WTC11 (cell line): ENCODE measurements at regions of chr22 and their contacts with region 1.

Region 1: DNA sequence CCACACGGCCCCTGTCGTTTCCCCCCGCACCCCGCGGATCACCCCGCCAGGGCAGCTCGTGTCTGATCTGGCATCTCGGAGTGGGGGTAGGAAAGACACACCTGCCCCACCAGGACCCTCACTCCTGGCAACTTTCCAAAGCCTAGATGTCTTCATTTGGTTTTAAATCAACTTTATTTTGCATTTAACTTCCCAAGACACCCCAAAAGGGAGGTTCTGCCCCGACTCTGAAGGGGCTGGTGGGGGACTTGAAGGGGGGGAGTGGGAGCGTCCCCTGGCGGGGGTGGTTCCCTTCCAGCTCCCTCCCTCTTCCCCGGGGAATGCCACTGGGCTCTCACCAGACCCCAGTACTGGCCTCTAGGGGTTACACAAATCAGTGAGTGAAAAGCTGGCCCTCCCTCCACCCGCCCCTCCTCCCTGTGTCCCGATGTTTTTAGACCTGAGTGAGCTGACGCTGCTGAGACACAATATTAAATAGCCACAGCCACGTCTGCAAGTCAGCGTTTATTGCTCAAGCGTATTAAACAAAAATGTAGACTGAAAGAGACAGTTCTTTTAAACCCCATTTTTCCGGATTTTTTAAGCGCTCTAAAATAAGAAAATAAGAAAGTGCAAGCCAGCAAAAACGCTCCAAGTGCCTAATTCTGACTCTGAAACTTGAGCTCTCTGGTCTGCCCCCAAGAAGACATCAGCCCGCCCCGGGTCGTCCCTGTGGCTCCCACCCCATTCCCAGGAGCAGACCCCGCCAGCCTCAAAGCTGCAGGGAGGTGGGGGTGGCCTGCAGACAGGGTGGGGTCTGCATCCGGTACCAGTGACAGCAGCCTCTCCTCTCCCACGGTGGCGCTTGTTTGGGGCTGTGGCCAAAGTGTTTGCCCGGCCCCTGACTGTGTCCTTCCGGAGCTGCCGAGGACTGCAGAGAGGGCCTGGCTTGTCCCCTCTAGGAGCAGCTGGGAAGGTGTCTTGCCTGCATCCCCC is 1.1 kb upstream of the TTLL8 start:
- DNase-seq: peak; percentile 59
- ATAC-seq: peak; percentile 74
- H3K4me3 Mint-ChIP-seq: peak overlapping the region; percentile 68
- H3K27ac Mint-ChIP-seq: no peak overlapping the region
- H3K4me1 Mint-ChIP-seq: peaks cover 12% of the 10 kb centered on the region
- H3K27me3 Mint-ChIP-seq: peaks cover 22% of the 10 kb centered on the region
- CTCF ChIP-seq: no peak

Region 2: DNA sequence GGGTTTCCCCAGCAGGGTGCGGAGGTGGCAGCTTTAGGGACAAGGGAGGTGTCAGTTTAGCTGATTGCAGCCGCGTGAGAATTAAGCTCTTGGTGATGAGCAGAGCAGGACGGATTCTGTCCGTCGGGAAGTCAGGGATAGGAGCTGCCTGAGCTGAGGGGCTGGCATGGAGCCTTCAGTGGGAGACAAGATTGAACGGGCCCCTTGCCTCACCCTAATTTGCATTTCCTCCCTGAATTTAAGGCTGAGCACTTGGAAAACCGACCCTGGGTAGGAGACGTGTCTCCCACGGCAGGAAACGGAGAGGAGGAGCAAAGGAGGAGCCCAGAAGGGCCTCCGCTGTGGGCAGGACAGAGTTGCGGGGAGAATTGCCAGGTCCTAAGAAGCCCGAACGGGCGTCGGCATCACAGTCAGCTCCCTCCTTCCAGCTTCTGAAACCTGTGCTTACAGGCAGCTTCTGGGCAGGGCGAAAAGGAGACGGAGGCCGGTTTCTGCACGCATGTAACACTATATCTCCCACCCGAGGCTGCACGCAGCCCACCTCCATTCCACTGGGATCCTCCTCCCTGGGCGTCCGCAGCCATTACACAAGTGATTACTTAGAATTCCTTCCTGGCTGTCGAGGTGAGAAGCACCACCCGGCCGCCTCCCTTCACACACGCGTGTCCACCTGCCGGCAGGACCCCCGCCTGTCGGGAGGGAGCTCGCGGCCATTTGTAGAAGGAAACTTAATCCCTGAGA is 577.4 kb before region 1 on chr22:
- CTCF ChIA-PET with region 1: no interaction called
- POLR2A ChIA-PET with region 1: no interaction called
- DNase-seq: no peak
- ATAC-seq: peak; percentile 78
- H3K4me3 Mint-ChIP-seq: peak overlapping the region; percentile 29; the same call in 1 of the 2 replicates
- H3K27ac Mint-ChIP-seq: no peak overlapping the region; the same call in 1 of the 2 replicates
- H3K4me1 Mint-ChIP-seq: peaks cover 50% of the 10 kb centered on the region
- H3K27me3 Mint-ChIP-seq: no peaks in the 10 kb centered on the region; the same call in 1 of the 2 replicates
- CTCF ChIP-seq: no peak

Region 3: GRCh38 chr22:49724893-49725474 is 334.2 kb before region 1 on chr22:
- CTCF ChIA-PET with region 1: no interaction called
- POLR2A ChIA-PET with region 1: no interaction called
- DNase-seq: peak; percentile 85
- ATAC-seq: peak; percentile 97
- H3K4me3 Mint-ChIP-seq: no peak overlapping the region
- H3K27ac Mint-ChIP-seq: no peak overlapping the region
- H3K4me1 Mint-ChIP-seq: no peaks in the 10 kb centered on the region
- H3K27me3 Mint-ChIP-seq: peaks cover 32% of the 10 kb centered on the region
- CTCF ChIP-seq: peak; percentile 33; the same call in 1 of the 2 replicates

Region 4: GRCh38 chr22:49970528-49971231 is 88.5 kb before region 1 on chr22:
- CTCF ChIA-PET with region 1: no interaction called
- POLR2A ChIA-PET with region 1: no interaction called
- DNase-seq: peak; percentile 64
- ATAC-seq: peak; percentile 73
- H3K4me3 Mint-ChIP-seq: peak overlapping the region; percentile 61
- H3K27ac Mint-ChIP-seq: peak overlapping the region; percentile 57; the same call in 1 of the 2 replicates
- H3K4me1 Mint-ChIP-seq: peaks cover 6% of the 10 kb centered on the region
- H3K27me3 Mint-ChIP-seq: peaks cover 8% of the 10 kb centered on the region
- CTCF ChIP-seq: no peak

Region 5: DNA sequence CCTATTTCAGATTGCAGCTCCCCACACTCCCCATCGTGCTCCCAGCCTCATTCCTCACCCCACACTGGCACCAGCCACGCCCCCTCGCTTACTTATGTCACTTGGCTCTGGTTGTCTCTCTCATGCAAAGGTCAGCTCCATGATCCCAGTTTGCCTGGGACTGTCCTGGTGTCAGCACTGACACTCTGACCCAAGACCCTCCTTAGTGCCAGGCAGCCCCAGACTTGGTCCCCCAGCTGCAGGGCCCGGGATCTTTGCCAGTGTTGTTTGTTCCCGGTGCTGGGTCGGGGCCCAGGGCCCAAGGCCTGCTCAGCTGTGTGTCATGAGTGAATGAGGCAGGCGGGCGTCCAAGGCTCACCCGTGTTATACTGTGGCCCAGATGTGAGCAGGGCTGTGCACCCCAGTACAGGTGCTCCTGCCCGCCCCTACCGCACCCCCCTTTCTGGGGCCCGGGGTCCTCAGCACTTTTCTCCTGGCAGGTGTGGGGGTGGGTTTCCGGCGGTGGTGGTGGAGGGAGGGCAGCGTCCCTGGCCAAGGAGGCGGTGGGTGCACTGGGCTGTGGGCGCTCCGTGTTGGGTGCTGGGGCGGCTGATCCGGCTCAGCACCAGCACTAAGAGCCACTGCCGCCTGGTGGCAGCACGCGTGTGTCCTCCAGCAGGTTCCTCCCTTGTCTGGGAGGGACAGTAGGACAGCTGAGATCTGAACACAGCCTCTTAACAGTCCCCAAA is 66.1 kb before region 1 on chr22:
- CTCF ChIA-PET with region 1: interaction called, 17 read pairs
- POLR2A ChIA-PET with region 1: no interaction called
- DNase-seq: peak; percentile 72
- ATAC-seq: peak; percentile 90
- H3K4me3 Mint-ChIP-seq: no peak overlapping the region
- H3K27ac Mint-ChIP-seq: no peak overlapping the region
- H3K4me1 Mint-ChIP-seq: no peaks in the 10 kb centered on the region
- H3K27me3 Mint-ChIP-seq: peaks cover 28% of the 10 kb centered on the region
- CTCF ChIP-seq: peak; percentile 55

Region 6: GRCh38 chr22:50074551-50075530 is 15.6 kb after region 1 on chr22:
- CTCF ChIA-PET with region 1: interaction called, 13 read pairs
- POLR2A ChIA-PET with region 1: no interaction called
- DNase-seq: no peak
- ATAC-seq: peak; percentile 31; the same call in 1 of the 2 replicates
- H3K4me3 Mint-ChIP-seq: no peak overlapping the region
- H3K27ac Mint-ChIP-seq: no peak overlapping the region
- H3K4me1 Mint-ChIP-seq: no peaks in the 10 kb centered on the region
- H3K27me3 Mint-ChIP-seq: no peaks in the 10 kb centered on the region
- CTCF ChIP-seq: no peak

Region 7: GRCh38 chr22:50085211-50085972 is 26.2 kb after region 1 on chr22 and contains the start of gene MLC1:
- CTCF ChIA-PET with region 1: interaction called, 13 read pairs
- POLR2A ChIA-PET with region 1: no interaction called
- DNase-seq: no peak
- ATAC-seq: peak; percentile 55
- H3K4me3 Mint-ChIP-seq: peak within 1 kb of the TSS; percentile 22
- H3K27ac Mint-ChIP-seq: no peak within 1 kb of the TSS
- H3K4me1 Mint-ChIP-seq: no peaks in the 10 kb centered on the region; the same call in 1 of the 2 replicates
- H3K27me3 Mint-ChIP-seq: peaks cover 8% of the 10 kb centered on the region; the same call in 1 of the 2 replicates
- CTCF ChIP-seq: no peak
- total RNA-seq, gene MLC1: 0.13 to 0.16 TPM (median 0.16 TPM) in 3 replicates

Region 8: GRCh38 chr22:50141891-50142363 is 82.7 kb after region 1 on chr22:
- CTCF ChIA-PET with region 1: interaction called, 12 read pairs
- POLR2A ChIA-PET with region 1: no interaction called
- DNase-seq: peak; percentile 41
- ATAC-seq: peak; percentile 74
- H3K4me3 Mint-ChIP-seq: no peak overlapping the region
- H3K27ac Mint-ChIP-seq: no peak overlapping the region
- H3K4me1 Mint-ChIP-seq: peaks cover 2% of the 10 kb centered on the region; the same call in 1 of the 2 replicates
- H3K27me3 Mint-ChIP-seq: no peaks in the 10 kb centered on the region
- CTCF ChIP-seq: peak; percentile 28; the same call in 1 of the 2 replicates

Region 9: DNA sequence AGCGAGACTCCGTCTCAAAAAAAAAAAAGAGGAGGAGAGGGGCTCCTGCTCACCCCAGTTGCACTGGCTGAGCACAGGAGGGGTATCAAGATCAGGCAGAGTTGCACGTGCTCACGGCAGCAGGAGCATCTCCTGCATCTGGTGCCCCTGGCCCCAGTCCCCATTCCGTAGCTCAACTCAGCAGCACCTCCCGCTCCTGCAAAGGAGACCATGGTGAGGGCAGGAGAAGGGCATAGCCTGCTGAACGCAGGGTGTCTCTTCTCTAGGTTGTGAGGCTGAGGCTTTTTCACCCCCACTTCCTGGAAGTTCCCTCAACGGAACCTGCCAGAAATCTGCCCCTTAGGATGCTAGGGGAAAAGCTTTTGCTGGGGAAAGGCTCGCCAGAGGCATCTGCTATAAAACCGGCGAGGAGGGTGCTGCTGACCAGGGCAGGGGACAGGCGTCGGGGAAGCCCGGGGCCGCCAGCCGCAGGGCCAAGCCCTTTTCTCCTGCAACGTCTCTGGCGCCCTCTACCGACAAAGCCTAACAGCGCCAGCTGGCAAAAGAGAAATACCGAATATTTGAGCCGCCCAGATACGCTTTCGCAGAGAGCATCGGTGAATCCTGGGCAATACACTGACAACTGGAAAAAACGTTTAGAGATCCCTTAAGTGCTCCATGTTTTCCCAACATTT is 282.9 kb after region 1 on chr22:
- CTCF ChIA-PET with region 1: no interaction called
- POLR2A ChIA-PET with region 1: no interaction called
- DNase-seq: peak; percentile 96
- ATAC-seq: peak; percentile 79
- H3K4me3 Mint-ChIP-seq: peak overlapping the region; percentile 81
- H3K27ac Mint-ChIP-seq: peak overlapping the region; percentile 91
- H3K4me1 Mint-ChIP-seq: no peaks in the 10 kb centered on the region
- H3K27me3 Mint-ChIP-seq: peaks cover 11% of the 10 kb centered on the region
- CTCF ChIP-seq: peak; percentile 90